Posterior vena cava (tissue), 2 donors: ENCODE measurements at regions of chr18 and their contacts with region 1.

Region 1: GRCh38 chr18:73331212-73331772 is 463.5 kb upstream of the NETO1 start:
- DNase-seq: no peak

Region 2: DNA sequence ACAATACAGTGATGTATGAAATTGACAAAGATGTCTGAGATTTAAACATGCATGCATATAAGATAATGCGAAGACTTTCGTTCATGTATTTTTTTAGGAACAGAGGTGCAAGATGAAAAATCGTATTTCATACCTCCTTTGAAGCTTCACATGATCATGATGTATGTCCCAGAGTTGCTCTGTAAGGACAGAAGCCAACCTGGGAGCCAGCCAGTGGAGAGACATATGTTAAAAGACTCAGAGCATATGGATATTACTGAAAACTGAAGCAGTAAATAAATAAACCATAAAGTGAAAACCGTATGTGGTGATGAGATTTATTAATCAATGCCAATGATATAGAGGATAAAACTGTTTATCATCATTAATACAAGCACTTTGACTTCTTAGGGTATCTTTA is 39.1 kb before region 1 on chr18:
- intact Hi-C with region 1: loop called in 1 of 2 experiments (anchors 2 kb)
- DNase-seq: no peak

Region 3: DNA sequence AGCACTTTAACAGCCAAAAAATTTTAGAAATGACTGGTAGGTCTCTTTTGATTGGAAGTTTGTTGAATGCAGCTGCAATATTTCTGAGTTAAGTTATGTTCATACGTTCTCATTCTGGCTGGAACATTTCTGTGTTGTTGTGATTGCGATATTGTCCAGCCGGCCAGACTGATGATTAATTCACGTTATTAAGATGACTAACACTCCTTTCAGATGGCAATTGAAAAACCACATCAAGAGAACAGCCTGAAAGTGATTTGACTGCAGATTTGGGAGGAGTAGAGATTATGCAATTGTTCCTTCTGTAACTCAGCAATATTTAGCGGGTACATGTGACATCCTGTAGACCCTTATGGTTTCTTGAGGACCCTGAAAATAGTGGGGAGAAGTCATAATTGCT is 682.7 kb after region 1 on chr18:
- intact Hi-C with region 1: no loop called
- DNase-seq: no peak